H1 (cell line): ENCODE measurements at regions of chr1 and their contacts with region 1.

Region 1: GRCh38 chr1:240492832-240493440 is 119.0 kb downstream of the GREM2 start:
- DNase-seq: peak; percentile 78 to 81
- H3K4me3 ChIP-seq: peak overlapping the region; percentile 26 to 53 (median 36); a peak in 6 of 8 replicates
- H3K27ac ChIP-seq: no peak overlapping the region
- H3K4me1 ChIP-seq: peaks cover 0 to 4% (median under 1%) of the 10 kb centered on the region in 4 experiments; a peak in 2 of 7 replicates
- H3K27me3 ChIP-seq: peaks cover 0 to 14% (median 10%) of the 10 kb centered on the region in 4 experiments; a peak in 4 of 7 replicates
- CTCF ChIP-seq: peak; percentile 71 to 77 (median 76)
- EP300 ChIP-seq: no peak
- POLR2A ChIP-seq: no peak
- RAD21 ChIP-seq: peak; percentile 37 to 57

Region 2: GRCh38 chr1:240304466-240304865 is 188.5 kb before region 1 on chr1:
- CTCF ChIA-PET with region 1: no interaction called
- POLR2A ChIA-PET with region 1: no interaction called
- DNase-seq: no peak
- H3K4me3 ChIP-seq: no peak overlapping the region
- H3K27ac ChIP-seq: no peak overlapping the region
- H3K4me1 ChIP-seq: peaks cover 0 to 3% (median 0%) of the 10 kb centered on the region in 4 experiments; a peak in 1 of 7 replicates
- H3K27me3 ChIP-seq: no peaks in the 10 kb centered on the region
- CTCF ChIP-seq: no peak
- EP300 ChIP-seq: no peak
- POLR2A ChIP-seq: no peak
- RAD21 ChIP-seq: no peak

Region 3: DNA sequence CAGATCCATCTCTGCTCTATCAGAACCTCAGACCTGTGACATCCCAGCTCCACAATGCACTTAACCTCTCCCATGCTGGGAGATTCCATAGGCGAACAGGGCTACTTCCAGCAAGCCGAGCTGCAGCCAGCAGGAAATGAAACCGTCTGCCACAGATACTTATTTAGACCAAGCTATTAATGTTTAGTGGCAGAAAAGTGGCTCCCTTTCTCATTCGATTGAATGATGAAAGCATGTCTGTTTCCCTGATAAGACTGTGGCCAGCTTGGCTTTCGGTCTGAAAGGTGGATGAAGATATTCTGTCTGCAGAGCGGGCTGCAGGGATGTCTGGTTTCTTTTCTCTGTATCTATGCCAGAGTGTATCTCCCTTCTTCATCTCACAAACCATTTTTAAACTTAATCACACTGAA is 27.4 kb before region 1 on chr1:
- CTCF ChIA-PET with region 1: interaction called, 20 read pairs
- POLR2A ChIA-PET with region 1: no interaction called
- DNase-seq: no peak
- H3K4me3 ChIP-seq: no peak overlapping the region
- H3K27ac ChIP-seq: no peak overlapping the region
- H3K4me1 ChIP-seq: no peaks in the 10 kb centered on the region; a peak in 1 of 7 replicates
- H3K27me3 ChIP-seq: no peaks in the 10 kb centered on the region
- CTCF ChIP-seq: no peak
- EP300 ChIP-seq: no peak
- POLR2A ChIP-seq: no peak
- RAD21 ChIP-seq: no peak

Region 4: DNA sequence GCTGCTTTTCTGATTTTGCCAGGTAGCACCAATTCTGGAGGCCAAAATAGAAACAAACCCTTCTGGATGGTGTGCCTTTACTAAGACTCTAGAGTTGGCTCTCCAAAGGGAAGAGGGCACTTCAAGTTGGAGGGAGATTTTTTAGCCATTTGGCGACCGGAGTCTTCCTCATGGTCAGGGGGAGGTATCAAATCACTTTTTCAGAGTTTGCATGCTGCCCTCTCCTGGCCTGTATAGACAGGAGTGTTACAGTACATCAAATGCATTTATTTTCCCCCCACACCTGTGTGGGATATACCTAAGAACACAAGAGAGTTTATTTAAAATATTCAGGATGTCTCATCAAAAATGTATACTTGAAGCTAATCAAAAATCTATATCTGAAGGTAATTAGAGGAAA is 115.8 kb after region 1 on chr1:
- CTCF ChIA-PET with region 1: interaction called, 12 read pairs
- POLR2A ChIA-PET with region 1: no interaction called
- DNase-seq: no peak
- H3K4me3 ChIP-seq: no peak overlapping the region
- H3K27ac ChIP-seq: no peak overlapping the region
- H3K4me1 ChIP-seq: peaks cover 0 to 12% (median 3%) of the 10 kb centered on the region in 4 experiments; a peak in 4 of 7 replicates
- H3K27me3 ChIP-seq: peaks cover 0 to 13% (median 5%) of the 10 kb centered on the region in 4 experiments; a peak in 4 of 7 replicates
- CTCF ChIP-seq: peak; percentile 16 to 64 (median 53)
- EP300 ChIP-seq: no peak
- POLR2A ChIP-seq: no peak
- RAD21 ChIP-seq: peak; percentile 68 to 73